Head of caudate nucleus (tissue), 42 donors: ENCODE measurements at regions of chrX and their contacts with region 1.

Region 1: GRCh38 chrX:53433651-53434639 is at the start of gene HSD17B10:
- DNase-seq: peak; percentile 74 to 95 (median 89)

Region 2: DNA sequence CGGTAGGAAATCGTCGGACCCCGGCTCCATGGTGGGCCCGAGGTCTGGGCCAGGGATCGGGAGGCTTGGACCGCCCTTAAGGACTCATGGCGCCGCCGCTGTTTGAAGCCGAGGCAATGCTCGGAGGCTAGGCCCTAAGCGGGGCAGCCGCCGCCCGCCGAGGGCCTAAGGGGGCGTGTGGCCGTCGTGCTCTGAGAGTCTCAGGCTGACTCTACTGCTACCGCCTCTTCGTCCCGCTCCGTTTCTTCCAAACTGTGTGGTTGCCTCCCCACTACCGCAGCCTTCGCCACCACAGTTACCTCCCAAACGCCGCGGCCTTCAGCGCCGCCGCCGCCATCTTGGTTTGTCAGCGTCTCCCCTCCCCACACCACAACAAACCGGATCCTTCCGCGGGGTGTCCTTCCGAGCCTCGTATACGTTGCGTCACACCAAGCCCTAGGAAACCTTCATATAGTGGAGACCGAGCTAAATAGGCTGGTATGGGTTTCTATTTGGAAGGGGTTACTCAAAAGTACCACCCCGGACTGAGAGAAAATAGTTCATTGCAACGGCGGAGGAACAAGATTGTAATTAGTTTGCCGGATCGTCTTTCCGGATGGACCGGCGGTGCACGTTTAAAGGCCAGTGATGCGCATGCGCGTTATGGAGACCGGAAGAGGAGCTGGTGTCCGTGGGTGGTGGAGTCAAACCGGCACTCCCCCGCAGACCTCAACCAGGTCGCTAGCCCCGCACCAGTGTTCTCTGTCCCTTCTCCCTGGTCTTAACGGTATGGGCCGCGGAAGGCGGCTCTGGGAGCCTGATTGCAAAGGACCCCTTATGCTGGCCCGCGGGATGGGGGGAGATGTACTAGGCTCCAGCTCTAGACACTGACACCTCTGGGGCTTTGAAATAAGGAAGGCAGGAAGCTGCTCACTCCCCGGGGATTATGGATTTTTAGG is 208.8 kb before region 1 on chrX and contains the start of gene KDM5C:
- intact Hi-C with region 1: loop called (anchors 10 kb)
- DNase-seq: peak; percentile 61 to 96 (median 92)

Region 3: DNA sequence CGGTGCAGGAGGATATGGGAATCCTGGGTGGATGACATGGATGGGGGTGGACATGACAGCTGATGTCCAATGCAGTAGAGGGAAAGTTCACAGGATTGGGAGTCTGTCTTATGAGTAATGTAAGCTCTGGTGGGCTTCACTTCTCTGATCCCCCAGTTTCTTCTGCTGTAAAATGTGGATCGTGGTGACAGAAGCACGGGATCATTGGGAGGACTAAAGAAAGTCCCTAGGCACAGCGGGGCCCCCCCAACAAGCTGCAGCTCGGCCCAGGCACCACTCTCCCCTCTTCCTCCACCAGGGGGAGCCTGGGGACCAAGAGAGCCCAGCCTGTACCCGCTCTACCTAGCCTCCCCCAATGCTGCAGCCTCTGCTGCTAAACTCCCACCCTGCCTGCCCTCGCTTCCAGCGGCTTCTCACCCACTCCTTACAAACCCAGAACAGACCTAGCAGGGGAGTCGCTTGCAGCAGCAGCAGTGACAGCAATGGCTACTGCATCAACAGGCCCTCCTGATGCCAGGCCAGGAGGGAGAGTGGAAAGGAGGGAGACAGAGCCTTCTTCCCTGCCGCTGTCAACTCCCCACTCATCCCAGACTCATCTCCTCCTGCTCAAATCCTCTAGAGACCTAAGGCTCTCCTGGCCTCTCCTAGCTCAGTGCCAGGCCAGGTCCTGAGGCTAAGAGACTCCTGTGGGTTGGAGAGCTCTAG is 116.4 kb before region 1 on chrX:
- intact Hi-C with region 1: loop called (anchors 5 kb)
- DNase-seq: peak; percentile 52 to 92 (median 81)

Region 4: GRCh38 chrX:53556868-53557267 is 122.9 kb after region 1 on chrX:
- intact Hi-C with region 1: no loop called
- DNase-seq: no peak